SK-N-SH (cell line): ENCODE measurements at regions of chr13 and their contacts with region 1.

Region 1: GRCh38 chr13:70987043-70987442 is 878.8 kb upstream of the KLHL1 start:
- DNase-seq: no peak
- H3K4me3 ChIP-seq: no peak overlapping the region
- H3K27ac ChIP-seq: no peak overlapping the region
- H3K4me1 ChIP-seq: no peaks in the 10 kb centered on the region
- H3K27me3 ChIP-seq: no peaks in the 10 kb centered on the region
- CTCF ChIP-seq: no peak
- EP300 ChIP-seq: no peak
- RAD21 ChIP-seq: no peak

Region 2: DNA sequence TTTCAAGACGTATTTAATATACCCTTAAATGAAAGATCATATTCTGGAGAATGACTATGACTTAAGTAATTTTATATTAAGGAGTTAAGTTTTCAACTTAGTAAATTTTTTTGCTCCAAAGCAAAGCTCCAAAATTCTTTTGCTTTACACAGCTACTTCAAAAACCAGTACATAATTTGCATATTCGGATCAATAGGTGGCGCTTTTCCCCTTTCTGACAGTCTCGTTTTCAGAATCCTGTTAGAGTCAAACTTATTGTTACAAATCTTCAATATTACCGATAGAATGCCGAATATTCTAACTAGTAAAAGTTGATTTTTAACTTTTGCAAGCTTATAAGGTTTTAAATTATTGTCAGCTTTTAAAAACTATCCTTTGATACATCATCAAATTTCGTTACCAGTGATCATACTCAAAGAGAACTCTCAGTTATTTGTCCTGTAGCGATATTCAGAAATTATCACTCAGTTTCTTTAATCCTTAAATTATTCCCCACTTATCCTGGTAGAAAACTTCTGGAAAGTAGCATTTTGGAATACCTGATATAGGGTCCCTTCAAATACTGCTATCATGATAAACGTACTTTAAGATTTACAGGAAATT is 26.1 kb before region 1 on chr13:
- CTCF ChIA-PET with region 1: interaction called, 14 read pairs
- POLR2A ChIA-PET with region 1: no interaction called
- DNase-seq: peak; percentile 23
- H3K4me3 ChIP-seq: no peak overlapping the region; a peak in 1 of 4 replicates
- H3K27ac ChIP-seq: no peak overlapping the region
- H3K4me1 ChIP-seq: no peaks in the 10 kb centered on the region; a peak in 1 of 4 replicates
- H3K27me3 ChIP-seq: no peaks in the 10 kb centered on the region
- CTCF ChIP-seq: peak; percentile 86
- EP300 ChIP-seq: no peak
- RAD21 ChIP-seq: peak; percentile 84